ENCODE measurements at regions of chr3 and their contacts with region 1.

Region 1: DNA sequence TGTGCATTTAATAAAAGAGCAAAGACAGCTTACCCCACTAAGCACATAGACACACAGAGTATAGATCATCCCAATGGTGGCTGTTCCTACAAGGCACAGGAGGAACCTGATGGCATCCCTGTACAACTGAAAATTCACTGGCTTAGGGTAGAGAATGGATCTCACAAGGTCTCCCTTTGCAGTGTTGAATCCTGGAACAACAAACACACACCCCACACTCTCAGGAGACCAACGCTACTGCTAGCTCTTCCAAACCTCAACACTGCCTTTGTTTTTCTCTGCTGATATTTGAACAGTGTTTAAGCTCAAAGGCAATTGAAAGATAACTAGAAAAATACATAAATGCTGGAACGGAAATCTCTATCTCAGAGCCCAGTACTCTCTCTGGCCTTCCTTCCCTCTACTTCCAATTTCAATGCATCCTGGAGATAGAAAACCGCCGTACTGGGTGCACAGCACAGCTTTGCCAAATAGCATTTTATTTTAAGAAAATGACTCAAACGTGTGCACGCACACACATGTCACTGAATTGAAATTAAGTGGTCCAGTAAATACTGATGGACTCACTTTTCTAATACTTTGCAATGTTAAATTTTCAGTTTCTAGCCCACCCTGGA is 87.5 kb upstream of the ATP13A5 start:
- DNase-seq: no peak
- ATAC-seq: no peak

Region 2: DNA sequence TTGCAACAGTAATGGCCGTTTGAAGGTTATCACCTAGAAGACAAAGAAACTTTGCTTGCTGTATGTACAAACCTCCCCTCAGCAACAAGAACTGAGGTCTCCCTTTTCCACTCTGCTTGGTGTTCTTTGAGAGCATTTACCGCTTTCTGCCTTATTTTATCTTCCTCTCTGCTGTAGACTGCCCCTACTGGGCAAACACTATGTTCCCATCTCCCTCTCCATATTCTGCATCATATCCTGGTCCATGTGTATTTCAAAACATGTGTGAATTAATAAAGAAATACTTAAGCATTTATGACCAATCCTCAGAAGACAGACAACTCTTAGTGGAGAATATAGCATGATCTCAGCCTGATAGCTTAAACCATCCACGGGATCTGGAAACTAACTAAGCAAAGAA is 151.9 kb before region 1 on chr3:
- intact Hi-C with region 1: no loop called
- DNase-seq: no peak
- ATAC-seq: no peak

Region 3: GRCh38 chr3:193572426-193572908 is 106.4 kb after region 1 on chr3:
- intact Hi-C with region 1: loop called (anchors 10 kb)
- DNase-seq: peak; percentile 40
- ATAC-seq: peak; percentile 73

Region 4: GRCh38 chr3:193883551-193883950 is 417.5 kb after region 1 on chr3:
- intact Hi-C with region 1: no loop called
- DNase-seq: no peak
- ATAC-seq: no peak